ENCODE measurements at regions of chr19 and their contacts with region 1.

Region 1: GRCh38 chr19:14479975-14480699 is 5.0 kb upstream of the PTGER1 start:
- DNase-seq: peak in 1 of 2 experiments; percentile 99
- H3K4me3 ChIP-seq: no peak overlapping the region; a peak in 1 of 8 replicates
- H3K27ac ChIP-seq: 0 out of 2 replicates have a peak overlapping the region, but pooled peaks have one; percentile 12
- H3K4me1 ChIP-seq: peaks cover 0 to 21% (median 9%) of the 10 kb centered on the region in 4 experiments; a peak in 6 of 7 replicates
- H3K27me3 ChIP-seq: no peaks in the 10 kb centered on the region
- CTCF ChIP-seq: peak; percentile 95 to 98 (median 98)
- EP300 ChIP-seq: 0 out of 3 replicates have a peak, but pooled peaks of 1 of the 2 experiments have one; percentile 45
- POLR2A ChIP-seq: no peak
- RAD21 ChIP-seq: peak; percentile 66 to 79

Region 2: DNA sequence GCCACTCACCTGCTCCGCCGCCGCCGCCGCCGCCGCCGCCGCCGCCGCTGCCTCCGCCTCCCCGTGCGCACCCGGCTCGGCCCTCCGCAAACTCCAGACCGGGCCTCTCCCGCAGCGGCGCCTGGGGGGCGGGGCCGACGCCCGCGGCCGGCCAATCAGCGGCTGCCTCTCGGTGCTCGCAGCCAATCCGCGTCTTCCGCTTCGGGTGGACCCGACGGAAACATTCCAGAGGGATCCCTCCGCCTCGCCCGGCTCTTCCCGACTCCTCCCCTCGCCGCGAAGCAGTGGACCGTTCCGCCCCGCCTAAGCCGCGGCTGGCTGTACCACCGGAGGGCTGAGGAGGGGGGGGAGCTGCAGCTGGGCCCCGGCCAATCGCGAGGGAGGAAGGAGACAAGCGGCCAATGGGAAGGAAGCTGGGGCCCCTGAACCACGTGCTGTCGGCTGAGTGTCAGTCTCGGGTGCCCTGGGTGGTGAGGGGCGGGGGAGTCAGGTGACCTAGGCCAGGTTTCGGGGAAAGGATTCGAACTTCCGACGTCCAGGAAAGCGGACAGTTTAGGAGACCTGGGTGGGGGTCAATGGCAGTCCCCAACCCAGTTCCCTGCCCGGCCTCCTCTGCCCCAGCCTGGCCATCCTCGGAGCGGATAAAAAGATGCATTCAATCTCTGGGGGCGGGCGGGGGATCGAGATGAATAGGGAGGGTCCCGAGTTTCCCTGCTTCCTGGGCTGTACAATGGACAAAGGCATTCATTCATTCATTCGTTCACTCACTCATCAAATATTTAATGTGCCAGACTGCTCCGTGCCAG is 16.1 kb after region 1 on chr19 and contains the start of gene GIPC1:
- CTCF ChIA-PET with region 1: interaction called, 34 read pairs
- POLR2A ChIA-PET with region 1: interaction called, 45 read pairs
- DNase-seq: peak; percentile 95 to 97
- H3K4me3 ChIP-seq: peak within 1 kb of the TSS; percentile 46 to 80 (median 69)
- H3K27ac ChIP-seq: peak within 1 kb of the TSS; percentile 37; the same call in 1 of the 2 replicates
- H3K4me1 ChIP-seq: peaks cover 0 to 13% (median 6%) of the 10 kb centered on the region in 4 experiments; a peak in 5 of 7 replicates
- H3K27me3 ChIP-seq: no peaks in the 10 kb centered on the region
- CTCF ChIP-seq: no peak
- EP300 ChIP-seq: peak in 1 of 2 experiments; percentile 100; a peak in 2 of 3 replicates
- POLR2A ChIP-seq: no peak
- RAD21 ChIP-seq: no peak
- total RNA-seq, gene GIPC1: 65.6 and 68.3 TPM in 2 replicates

Region 3: GRCh38 chr19:14505488-14506432 is 25.6 kb after region 1 on chr19:
- CTCF ChIA-PET with region 1: interaction called, 36 read pairs
- POLR2A ChIA-PET with region 1: no interaction called
- DNase-seq: peak in 1 of 2 experiments; percentile 97
- H3K4me3 ChIP-seq: no peak overlapping the region
- H3K27ac ChIP-seq: peak overlapping the region; percentile 37; the same call in 1 of the 2 replicates
- H3K4me1 ChIP-seq: peaks cover 0 to 4% (median 2%) of the 10 kb centered on the region in 4 experiments; a peak in 3 of 7 replicates
- H3K27me3 ChIP-seq: no peaks in the 10 kb centered on the region
- CTCF ChIP-seq: peak; percentile 75 to 92 (median 89)
- EP300 ChIP-seq: no peak
- POLR2A ChIP-seq: no peak
- RAD21 ChIP-seq: peak in 1 of 2 experiments; percentile 47; a peak in 3 of 4 replicates

Region 4: GRCh38 chr19:14614099-14614412 is 133.9 kb after region 1 on chr19:
- CTCF ChIA-PET with region 1: no interaction called
- POLR2A ChIA-PET with region 1: no interaction called
- DNase-seq: no peak
- H3K4me3 ChIP-seq: no peak overlapping the region
- H3K27ac ChIP-seq: no peak overlapping the region
- H3K4me1 ChIP-seq: no peaks in the 10 kb centered on the region
- H3K27me3 ChIP-seq: no peaks in the 10 kb centered on the region
- CTCF ChIP-seq: no peak
- EP300 ChIP-seq: no peak
- POLR2A ChIP-seq: no peak
- RAD21 ChIP-seq: no peak

Measured in H1 (cell line).